Calu3 (cell line): ENCODE measurements at regions of chr12 and their contacts with region 1.

Region 1: DNA sequence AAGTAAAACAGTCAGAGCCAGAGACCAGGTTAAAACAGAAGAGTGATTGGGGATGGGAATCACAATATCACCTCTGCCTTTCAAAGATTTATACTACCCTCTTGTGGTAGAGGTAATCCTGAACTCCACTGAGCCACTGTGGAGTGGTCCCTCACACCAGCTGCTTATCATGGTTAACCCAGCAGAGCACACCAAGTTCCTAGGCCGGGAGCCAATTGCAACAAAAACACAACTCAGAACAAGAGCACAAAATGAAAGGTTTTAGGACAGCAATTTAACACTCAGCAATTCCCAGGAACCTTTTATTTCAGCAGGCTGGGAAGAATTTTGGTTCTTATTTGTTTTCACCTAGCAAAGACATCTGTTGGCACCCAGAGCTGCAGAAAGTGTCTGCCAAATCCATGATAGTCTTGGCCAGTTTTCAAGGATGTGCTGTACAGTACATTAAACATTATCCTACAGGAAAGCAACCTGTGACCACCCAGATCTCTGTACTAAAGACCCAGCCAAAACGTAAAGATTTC is 220.5 kb upstream of the ATXN7L3B start:
- DNase-seq: peak; percentile 52
- H3K4me3 Mint-ChIP-seq: no peak overlapping the region
- H3K27ac Mint-ChIP-seq: no peak overlapping the region
- H3K4me1 Mint-ChIP-seq: peaks cover 17% of the 10 kb centered on the region
- H3K27me3 Mint-ChIP-seq: no peaks in the 10 kb centered on the region
- CTCF ChIP-seq: peak; percentile 51

Region 2: DNA sequence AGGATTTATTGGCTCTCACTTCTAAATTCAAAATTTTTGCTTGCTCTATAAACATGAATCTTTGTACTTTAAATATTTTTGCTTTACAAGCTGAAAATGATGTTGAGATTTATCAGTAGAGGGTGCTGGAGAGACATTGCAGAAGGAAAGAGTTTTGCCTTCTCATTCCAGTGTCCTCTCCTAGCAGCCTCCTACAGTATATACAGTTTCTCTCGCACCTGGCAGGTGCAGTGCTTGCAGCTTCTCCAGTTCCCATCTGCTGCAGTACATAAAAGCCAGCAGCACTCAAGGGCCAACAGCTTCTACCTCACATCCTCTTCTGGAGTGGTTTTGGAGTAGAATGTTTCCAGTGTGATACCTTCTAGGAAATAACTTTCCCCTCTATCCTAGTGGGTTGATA is 381.3 kb before region 1 on chr12:
- CTCF ChIA-PET with region 1: interaction called, 7 read pairs
- intact Hi-C with region 1: loop called (anchors 1 kb)
- DNase-seq: peak; percentile 5
- H3K4me3 Mint-ChIP-seq: no peak overlapping the region
- H3K27ac Mint-ChIP-seq: no peak overlapping the region
- H3K4me1 Mint-ChIP-seq: peaks cover 9% of the 10 kb centered on the region
- H3K27me3 Mint-ChIP-seq: no peaks in the 10 kb centered on the region
- CTCF ChIP-seq: peak; percentile 48

Region 3: GRCh38 chr12:74021937-74022336 is 295.2 kb before region 1 on chr12:
- CTCF ChIA-PET with region 1: interaction called, 9 read pairs
- intact Hi-C with region 1: loop called (anchors 1 kb)
- DNase-seq: peak; percentile 85
- H3K4me3 Mint-ChIP-seq: no peak overlapping the region
- H3K27ac Mint-ChIP-seq: no peak overlapping the region
- H3K4me1 Mint-ChIP-seq: peaks cover 10% of the 10 kb centered on the region
- H3K27me3 Mint-ChIP-seq: no peaks in the 10 kb centered on the region
- CTCF ChIP-seq: peak; percentile 64

Region 4: GRCh38 chr12:74111688-74112360 is 205.3 kb before region 1 on chr12:
- CTCF ChIA-PET with region 1: interaction called, 8 read pairs
- intact Hi-C with region 1: loop called (anchors 1 kb)
- DNase-seq: peak; percentile 66
- H3K4me3 Mint-ChIP-seq: no peak overlapping the region
- H3K27ac Mint-ChIP-seq: no peak overlapping the region
- H3K4me1 Mint-ChIP-seq: no peaks in the 10 kb centered on the region
- H3K27me3 Mint-ChIP-seq: no peaks in the 10 kb centered on the region
- CTCF ChIP-seq: peak; percentile 43

Region 5: GRCh38 chr12:74391283-74391682 is 74.1 kb after region 1 on chr12:
- CTCF ChIA-PET with region 1: no interaction called
- intact Hi-C with region 1: no loop called
- DNase-seq: peak; percentile 4
- H3K4me3 Mint-ChIP-seq: no peak overlapping the region
- H3K27ac Mint-ChIP-seq: peak overlapping the region; percentile 21
- H3K4me1 Mint-ChIP-seq: peaks cover 37% of the 10 kb centered on the region
- H3K27me3 Mint-ChIP-seq: no peaks in the 10 kb centered on the region
- CTCF ChIP-seq: no peak